CD4-positive, alpha-beta T cell (primary cell): ENCODE measurements at regions of chrX and their contacts with region 1.

Region 1: DNA sequence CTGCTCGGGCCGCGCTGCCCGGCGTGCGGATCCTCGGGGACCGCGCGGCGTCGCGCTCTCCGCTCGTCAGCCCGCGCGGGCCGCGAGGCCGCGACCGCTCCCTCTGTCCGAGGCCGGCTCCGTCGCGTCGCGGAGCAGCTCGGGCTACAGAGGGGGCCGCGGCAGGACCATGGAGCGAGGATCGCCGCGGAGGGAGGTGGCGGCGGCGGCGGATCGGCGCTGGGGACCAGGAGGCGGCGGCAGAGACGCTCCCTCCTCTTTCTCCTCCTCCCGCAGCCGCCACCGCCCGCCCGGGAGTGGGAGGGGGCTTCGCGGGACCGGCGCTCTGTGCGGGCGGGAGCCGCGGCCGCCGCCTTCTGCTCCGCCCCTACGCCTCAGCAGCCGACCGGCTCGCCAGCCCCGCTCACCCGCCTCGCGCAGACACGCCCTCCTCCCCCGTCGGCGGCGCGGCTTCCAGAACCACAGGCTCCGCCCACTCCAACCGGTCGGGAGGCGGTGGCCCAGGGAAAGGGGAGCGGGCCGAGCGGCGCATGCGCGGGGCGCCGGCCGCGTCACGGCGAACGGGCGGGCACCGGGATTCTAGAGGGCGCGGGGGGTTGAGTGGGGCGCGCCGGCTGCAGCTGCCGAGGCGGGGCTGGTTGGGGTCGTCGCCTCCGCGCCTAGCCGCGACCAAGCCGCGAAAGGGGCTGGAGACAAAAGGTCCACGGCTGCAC is at the start of gene CASK:
- DNase-seq: peak; percentile 73 to 96 (median 87)
- ATAC-seq: peak; percentile 86
- H3K4me3 ChIP-seq: peak within 1 kb of the TSS; percentile 84
- H3K4me3 Mint-ChIP-seq: peak within 1 kb of the TSS; percentile 94
- H3K27ac ChIP-seq: peak within 1 kb of the TSS; percentile 52 to 68
- H3K27ac Mint-ChIP-seq: peak within 1 kb of the TSS; percentile 91
- H3K4me1 ChIP-seq: peaks cover 3% of the 10 kb centered on the region
- H3K4me1 Mint-ChIP-seq: peaks cover 44% of the 10 kb centered on the region
- H3K27me3 ChIP-seq: no peaks in the 10 kb centered on the region
- H3K27me3 Mint-ChIP-seq: no peaks in the 10 kb centered on the region
- CTCF ChIP-seq: no peak
- total RNA-seq, gene CASK: 39.9 to 44.6 TPM

Region 2: GRCh38 chrX:41870719-41871151 is 52.7 kb before region 1 on chrX:
- CTCF ChIA-PET with region 1: no interaction called
- POLR2A ChIA-PET with region 1: no interaction called
- intact Hi-C with region 1: loop called in 1 of 2 experiments (anchors 10 kb)
- DNase-seq: no peak
- ATAC-seq: no peak
- H3K4me3 ChIP-seq: no peak overlapping the region
- H3K4me3 Mint-ChIP-seq: no peak overlapping the region
- H3K27ac ChIP-seq: no peak overlapping the region
- H3K27ac Mint-ChIP-seq: no peak overlapping the region
- H3K4me1 ChIP-seq: peaks cover 15% of the 10 kb centered on the region
- H3K4me1 Mint-ChIP-seq: peaks cover 68% of the 10 kb centered on the region
- H3K27me3 ChIP-seq: no peaks in the 10 kb centered on the region
- H3K27me3 Mint-ChIP-seq: no peaks in the 10 kb centered on the region
- CTCF ChIP-seq: no peak

Region 3: GRCh38 chrX:43654431-43655150 is 1731.2 kb after region 1 on chrX:
- CTCF ChIA-PET with region 1: no interaction called
- POLR2A ChIA-PET with region 1: interaction called, 3 read pairs
- intact Hi-C with region 1: loop called in 1 of 2 experiments (anchors 5 kb)
- DNase-seq: peak; percentile 70 to 94 (median 82)
- ATAC-seq: peak; percentile 91
- H3K4me3 ChIP-seq: peak overlapping the region; percentile 71
- H3K4me3 Mint-ChIP-seq: peak overlapping the region; percentile 92
- H3K27ac ChIP-seq: peak overlapping the region in 1 of 2 donors; percentile 79
- H3K27ac Mint-ChIP-seq: peak overlapping the region; percentile 95
- H3K4me1 ChIP-seq: peaks cover 17% of the 10 kb centered on the region
- H3K4me1 Mint-ChIP-seq: peaks cover 10% of the 10 kb centered on the region
- H3K27me3 ChIP-seq: peaks cover 0 to 5% of the 10 kb centered on the region in 2 experiments
- H3K27me3 Mint-ChIP-seq: no peaks in the 10 kb centered on the region
- CTCF ChIP-seq: no peak